PC-9 (cell line): ENCODE measurements at regions of chr7 and their contacts with region 1.

Region 1: DNA sequence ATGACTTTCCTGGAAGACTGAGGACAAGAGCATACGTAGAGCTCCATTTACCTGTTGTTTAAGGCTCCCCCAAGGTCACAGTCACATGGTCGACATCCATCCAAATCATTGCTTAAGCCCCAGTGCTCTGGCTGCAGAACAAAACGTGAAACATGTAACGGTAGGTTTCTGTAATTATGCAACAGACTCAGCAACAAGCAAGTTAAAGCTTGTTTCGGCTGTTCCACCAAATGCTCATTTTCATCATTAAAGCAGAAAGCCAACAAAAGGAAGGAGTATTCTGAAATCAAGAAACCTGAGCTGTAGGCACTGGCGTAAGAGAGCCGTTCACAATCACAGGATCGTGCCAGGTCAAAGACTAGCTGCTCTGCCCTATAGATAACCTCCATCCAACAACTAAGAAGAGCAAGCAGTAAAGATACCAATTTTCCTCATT is 30.0 kb downstream of the LAMB1 start:
- DNase-seq: no peak
- H3K4me3 ChIP-seq: no peak overlapping the region
- H3K27ac ChIP-seq: no peak overlapping the region
- H3K4me1 ChIP-seq: no peaks in the 10 kb centered on the region
- H3K27me3 ChIP-seq: no peaks in the 10 kb centered on the region
- CTCF ChIP-seq: no peak

Region 2: GRCh38 chr7:107286751-107287621 is 686.0 kb before region 1 on chr7:
- CTCF ChIA-PET with region 1: no interaction called
- POLR2A ChIA-PET with region 1: no interaction called
- intact Hi-C with region 1: no loop called
- DNase-seq: no peak
- H3K4me3 ChIP-seq: no peak overlapping the region
- H3K27ac ChIP-seq: no peak overlapping the region
- H3K4me1 ChIP-seq: peaks cover 4% of the 10 kb centered on the region; the same call in 1 of the 2 replicates
- H3K27me3 ChIP-seq: no peaks in the 10 kb centered on the region
- CTCF ChIP-seq: no peak

Region 3: GRCh38 chr7:107948645-107949497 is 24.1 kb before region 1 on chr7:
- CTCF ChIA-PET with region 1: no interaction called
- POLR2A ChIA-PET with region 1: interaction called, 4 read pairs
- intact Hi-C with region 1: loop called (anchors 1 kb)
- DNase-seq: peak; percentile 57 to 94
- H3K4me3 ChIP-seq: peak overlapping the region; percentile 12; the same call in 1 of the 2 replicates
- H3K27ac ChIP-seq: peak overlapping the region; percentile 86
- H3K4me1 ChIP-seq: peaks cover 76% of the 10 kb centered on the region
- H3K27me3 ChIP-seq: no peaks in the 10 kb centered on the region
- CTCF ChIP-seq: no peak

Region 4: GRCh38 chr7:108002726-108003598 is 30.0 kb after region 1 on chr7 and contains the start of gene LAMB1:
- CTCF ChIA-PET with region 1: interaction called, 13 read pairs
- POLR2A ChIA-PET with region 1: no interaction called
- intact Hi-C with region 1: no loop called
- DNase-seq: peak; percentile 59 to 89
- H3K4me3 ChIP-seq: peak within 1 kb of the TSS; percentile 64
- H3K27ac ChIP-seq: no peak within 1 kb of the TSS
- H3K4me1 ChIP-seq: peaks cover 41% of the 10 kb centered on the region
- H3K27me3 ChIP-seq: no peaks in the 10 kb centered on the region
- CTCF ChIP-seq: no peak
- total RNA-seq, gene LAMB1: 236 and 242 TPM in 2 replicates